ENCODE measurements at regions of chr1 and their contacts with region 1.

Region 1: DNA sequence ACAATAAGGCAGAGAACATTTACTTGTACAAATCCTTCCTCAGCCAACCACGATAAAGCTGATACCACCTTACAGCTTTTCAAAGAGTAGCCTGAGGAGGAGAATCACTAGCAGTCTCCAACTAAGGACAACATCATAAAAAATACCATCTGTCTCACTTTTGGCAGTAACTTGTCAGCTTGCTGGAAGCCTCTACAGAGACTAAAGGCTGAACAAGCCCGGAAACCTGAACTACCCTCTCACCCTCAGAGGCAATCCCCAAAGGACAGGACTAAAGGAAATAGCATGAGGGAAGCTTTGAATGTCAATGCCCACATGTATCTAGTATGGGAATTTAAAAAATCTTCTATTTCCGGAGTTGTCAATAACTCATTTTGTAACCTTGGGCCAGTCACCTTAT is 10.6 kb downstream of the SRSF4 start:
- DNase-seq: no peak
- ATAC-seq: no peak
- H3K4me3 ChIP-seq: no peak overlapping the region
- H3K27ac ChIP-seq: no peak overlapping the region
- H3K4me1 ChIP-seq: 0 out of 3 replicates have a peak, but pooled peaks cover 3% of the 10 kb centered on the region
- CTCF ChIP-seq: no peak
- EP300 ChIP-seq: no peak
- POLR2A ChIP-seq: no peak
- RAD21 ChIP-seq: no peak

Region 2: DNA sequence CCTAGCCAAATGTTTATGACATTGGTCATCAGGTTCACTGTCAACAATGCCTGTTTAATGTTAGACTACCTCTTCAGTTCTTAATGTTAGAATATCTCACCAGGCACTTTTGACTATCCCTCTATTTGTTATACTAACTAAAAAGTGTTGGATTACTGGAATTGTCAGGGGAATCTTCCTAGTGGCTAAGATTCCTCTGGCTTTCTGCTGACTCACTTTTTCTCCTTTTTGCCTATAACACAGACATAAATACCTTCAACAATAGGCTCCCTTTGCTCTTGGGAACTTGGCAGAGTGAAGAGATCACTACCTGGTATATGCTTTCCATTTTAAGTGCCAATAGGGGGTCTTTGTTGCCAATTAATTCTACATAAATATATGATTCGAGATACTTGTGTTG is 115.9 kb before region 1 on chr1:
- CTCF ChIA-PET with region 1: no interaction called
- POLR2A ChIA-PET with region 1: no interaction called
- DNase-seq: peak in 1 of 2 experiments; percentile 4
- ATAC-seq: no peak
- H3K4me3 ChIP-seq: no peak overlapping the region
- H3K27ac ChIP-seq: no peak overlapping the region
- H3K4me1 ChIP-seq: peaks cover 8% of the 10 kb centered on the region
- CTCF ChIP-seq: no peak
- EP300 ChIP-seq: no peak
- POLR2A ChIP-seq: no peak
- RAD21 ChIP-seq: no peak

Region 3: DNA sequence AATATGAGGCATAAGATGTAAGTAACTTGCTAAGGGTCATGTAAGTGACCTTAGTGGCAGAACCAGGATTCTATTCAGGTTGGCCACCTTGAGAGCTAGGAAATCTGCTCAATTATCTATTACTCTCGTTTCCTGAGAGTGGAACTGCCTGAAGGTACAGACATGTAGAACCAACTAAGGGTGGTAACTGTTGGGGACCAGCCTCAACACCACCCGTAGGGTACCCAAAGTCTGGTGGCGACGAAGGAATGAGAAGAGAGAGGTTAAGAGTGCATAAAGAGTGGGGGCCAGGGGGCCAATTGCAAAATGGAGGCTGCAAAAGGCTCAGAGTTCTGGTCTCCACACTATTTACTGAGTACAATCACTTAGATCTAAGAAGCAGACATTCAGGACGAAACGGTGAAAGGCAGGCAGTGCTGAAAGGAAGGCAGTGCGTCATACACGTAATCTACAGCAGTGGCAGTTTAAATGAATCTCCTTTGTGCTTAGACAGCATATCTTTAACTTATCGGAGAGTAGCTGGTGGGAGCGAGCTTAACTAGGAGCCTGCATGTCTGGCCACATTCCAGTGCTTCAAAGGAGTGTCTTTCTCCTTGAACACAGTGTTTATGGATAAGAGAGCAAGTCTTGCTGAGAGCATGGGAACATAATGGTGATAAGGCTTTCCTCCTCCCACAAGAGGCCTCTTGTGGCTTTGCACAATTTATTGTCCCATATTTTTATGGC is 14.4 kb before region 1 on chr1:
- CTCF ChIA-PET with region 1: interaction called, 11 read pairs
- POLR2A ChIA-PET with region 1: no interaction called
- DNase-seq: no peak
- ATAC-seq: no peak
- H3K4me3 ChIP-seq: no peak overlapping the region
- H3K27ac ChIP-seq: no peak overlapping the region
- H3K4me1 ChIP-seq: peaks cover 4% of the 10 kb centered on the region; the same call in 2 of the 3 replicates
- CTCF ChIP-seq: no peak
- EP300 ChIP-seq: no peak
- POLR2A ChIP-seq: no peak
- RAD21 ChIP-seq: no peak

Measured in A549 (cell line).